ENCODE measurements at regions of chr18 and their contacts with region 1.

Region 1: DNA sequence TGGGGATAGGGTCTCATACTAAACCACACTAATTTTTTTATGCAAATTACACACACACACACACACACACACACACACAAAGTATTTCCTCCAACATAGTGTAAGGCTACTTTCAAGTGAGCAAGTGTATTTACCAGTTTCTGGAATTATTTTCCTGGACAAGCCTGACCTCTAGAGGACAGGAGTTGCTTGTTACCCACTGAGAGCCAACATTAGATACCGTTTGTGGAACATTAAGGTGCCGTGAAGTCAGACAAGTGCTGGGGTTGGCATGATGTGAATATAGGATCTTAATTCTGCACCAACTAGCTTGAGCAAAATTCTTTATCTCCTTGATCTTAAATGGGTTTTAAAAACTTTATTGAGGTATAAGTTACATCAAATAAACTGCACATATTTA is 39.3 kb upstream of the SERPINB2 start:
- DNase-seq: no peak
- H3K4me3 ChIP-seq: no peak overlapping the region
- H3K27ac ChIP-seq: no peak overlapping the region
- H3K4me1 ChIP-seq: no peaks in the 10 kb centered on the region
- H3K27me3 ChIP-seq: no peaks in the 10 kb centered on the region
- CTCF ChIP-seq: peak; percentile 29 to 49 (median 32)
- POLR2A ChIP-seq: no peak

Region 2: GRCh38 chr18:63518178-63519012 is 329.8 kb before region 1 on chr18:
- intact Hi-C with region 1: loop called (anchors 10 kb)
- DNase-seq: no peak
- H3K4me3 ChIP-seq: no peak overlapping the region
- H3K27ac ChIP-seq: no peak overlapping the region
- H3K4me1 ChIP-seq: no peaks in the 10 kb centered on the region
- H3K27me3 ChIP-seq: no peaks in the 10 kb centered on the region
- CTCF ChIP-seq: peak; percentile 49 to 86 (median 79)
- POLR2A ChIP-seq: no peak